ENCODE measurements at regions of chr17 and their contacts with region 1.

Region 1: DNA sequence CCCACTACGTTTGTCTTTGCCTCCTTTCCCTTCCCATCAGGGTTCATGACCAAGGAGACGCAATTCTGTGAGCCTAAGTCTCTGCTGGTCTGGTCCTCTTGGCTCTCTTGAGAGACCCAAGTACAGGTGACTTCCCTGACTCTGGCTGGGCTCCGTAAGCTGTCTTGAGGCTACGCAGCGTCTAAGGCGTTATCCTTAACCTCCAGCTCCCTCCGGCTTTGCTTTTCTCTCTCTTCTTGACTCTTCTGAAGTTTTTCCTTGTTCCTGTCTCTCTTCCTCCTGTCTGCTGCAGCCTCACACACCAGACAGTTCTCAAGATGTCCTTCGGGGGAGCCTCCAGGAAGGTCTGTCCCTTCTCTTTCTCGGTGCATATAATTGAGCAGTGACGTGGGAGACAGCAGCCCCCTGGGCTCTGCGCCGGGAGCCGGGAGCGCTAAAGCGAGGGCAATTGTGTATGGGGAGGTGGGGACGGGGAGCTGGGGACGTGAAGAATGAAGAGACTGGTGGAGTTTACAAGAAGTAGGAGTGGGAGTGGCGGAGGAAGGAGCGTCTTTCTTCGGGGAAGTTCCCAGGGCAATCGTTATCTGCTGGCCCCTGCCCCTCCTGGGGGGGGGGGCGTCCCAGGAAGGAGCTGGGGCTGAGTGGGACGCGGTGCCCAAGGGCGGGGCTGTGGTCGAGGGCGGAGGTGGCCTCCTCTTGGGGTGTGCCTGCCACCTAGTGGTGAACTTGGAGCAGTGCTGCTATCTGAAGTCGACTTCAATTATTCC is 6.9 kb upstream of the PIRT start:
- ATAC-seq: peak; percentile 79 to 97 (median 95)
- H3K4me3 ChIP-seq: peak overlapping the region; percentile 29 to 48 (median 39)
- H3K27ac ChIP-seq: no peak overlapping the region
- H3K4me1 ChIP-seq: peaks cover 0 to 8% of the 10 kb centered on the region in 2 donors

Region 2: DNA sequence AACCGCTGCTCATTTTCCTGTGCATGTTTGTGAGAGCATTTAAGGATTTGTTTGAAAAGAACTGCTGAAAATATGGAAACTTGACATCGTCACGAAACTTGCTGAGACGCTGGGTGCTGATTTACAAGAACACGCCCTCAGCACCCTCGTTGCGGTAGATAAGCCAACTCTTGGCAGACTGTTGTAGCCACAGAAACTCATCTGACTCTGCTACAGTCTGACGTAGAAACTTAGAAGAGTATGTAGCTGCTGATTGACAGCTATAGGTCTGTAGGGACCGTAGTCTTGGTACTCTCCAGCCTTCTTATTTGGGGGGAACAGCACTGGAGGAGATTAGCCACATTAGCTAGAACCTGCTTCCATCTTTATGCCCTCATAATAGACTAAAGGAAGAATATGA is 259.3 kb before region 1 on chr17:
- in situ Hi-C with region 1: no loop called
- ATAC-seq: no peak
- H3K4me3 ChIP-seq: no peak overlapping the region
- H3K27ac ChIP-seq: no peak overlapping the region
- H3K4me1 ChIP-seq: no peaks in the 10 kb centered on the region

Region 3: GRCh38 chr17:10729334-10730193 is 115.2 kb before region 1 on chr17 and contains the start of gene TMEM220:
- in situ Hi-C with region 1: loop called in 4 of 9 experiments (anchors 10 to 25 kb)
- ATAC-seq: peak; percentile 71 to 92 (median 88)
- H3K4me3 ChIP-seq: peak within 1 kb of the TSS; percentile 26 to 41 (median 38)
- H3K27ac ChIP-seq: peak within 1 kb of the TSS in 1 of 2 donors; percentile 62
- H3K4me1 ChIP-seq: peaks cover 2 to 3% of the 10 kb centered on the region in 2 donors
- total RNA-seq, gene TMEM220: 1.1 to 18.7 (median 1.9) TPM

Region 4: DNA sequence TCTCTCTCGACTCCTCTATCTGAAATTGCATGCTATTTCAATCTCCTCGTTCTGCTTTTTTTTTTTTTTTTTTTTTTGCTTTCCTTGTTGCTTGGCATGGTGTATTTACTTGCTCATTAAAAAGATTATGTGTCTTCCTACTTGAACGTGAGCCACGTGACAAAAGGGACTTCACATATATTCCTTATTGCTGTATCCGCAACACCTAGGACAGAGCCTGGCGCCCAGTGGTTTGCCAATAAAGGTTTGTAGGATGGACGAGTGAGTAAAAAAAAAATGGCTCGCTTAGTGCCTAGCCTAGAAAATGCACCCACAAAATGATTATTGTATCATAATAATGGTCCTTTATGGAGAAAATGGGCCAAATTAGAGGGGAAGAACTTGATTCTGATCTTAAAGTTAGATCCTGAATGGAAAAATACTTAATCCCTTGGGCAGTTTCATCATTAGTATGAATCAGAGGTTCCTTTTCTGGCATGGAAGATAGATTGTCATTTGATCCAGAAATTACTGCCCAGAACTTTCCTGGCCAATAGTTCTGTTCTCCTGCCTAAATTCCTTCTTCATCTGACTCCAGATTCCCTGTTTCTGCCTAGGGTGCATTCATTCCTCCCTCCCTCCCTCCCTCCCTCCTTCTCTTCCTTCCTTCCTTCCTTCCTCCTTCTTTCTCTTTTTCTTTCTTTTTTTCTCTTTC is 101.3 kb before region 1 on chr17:
- in situ Hi-C with region 1: loop called in 5 of 9 experiments (anchors 10 to 25 kb)
- ATAC-seq: no peak
- H3K4me3 ChIP-seq: no peak overlapping the region
- H3K27ac ChIP-seq: no peak overlapping the region
- H3K4me1 ChIP-seq: peaks cover 5% of the 10 kb centered on the region in 2 donors

Region 5: GRCh38 chr17:10754109-10754508 is 90.7 kb before region 1 on chr17:
- in situ Hi-C with region 1: loop called in 4 of 9 experiments (anchors 5 to 25 kb)
- ATAC-seq: no peak
- H3K4me3 ChIP-seq: no peak overlapping the region
- H3K27ac ChIP-seq: no peak overlapping the region
- H3K4me1 ChIP-seq: peaks cover 18 to 33% of the 10 kb centered on the region in 2 donors